ENCODE measurements at regions of chr11 and their contacts with region 1.

Region 1: DNA sequence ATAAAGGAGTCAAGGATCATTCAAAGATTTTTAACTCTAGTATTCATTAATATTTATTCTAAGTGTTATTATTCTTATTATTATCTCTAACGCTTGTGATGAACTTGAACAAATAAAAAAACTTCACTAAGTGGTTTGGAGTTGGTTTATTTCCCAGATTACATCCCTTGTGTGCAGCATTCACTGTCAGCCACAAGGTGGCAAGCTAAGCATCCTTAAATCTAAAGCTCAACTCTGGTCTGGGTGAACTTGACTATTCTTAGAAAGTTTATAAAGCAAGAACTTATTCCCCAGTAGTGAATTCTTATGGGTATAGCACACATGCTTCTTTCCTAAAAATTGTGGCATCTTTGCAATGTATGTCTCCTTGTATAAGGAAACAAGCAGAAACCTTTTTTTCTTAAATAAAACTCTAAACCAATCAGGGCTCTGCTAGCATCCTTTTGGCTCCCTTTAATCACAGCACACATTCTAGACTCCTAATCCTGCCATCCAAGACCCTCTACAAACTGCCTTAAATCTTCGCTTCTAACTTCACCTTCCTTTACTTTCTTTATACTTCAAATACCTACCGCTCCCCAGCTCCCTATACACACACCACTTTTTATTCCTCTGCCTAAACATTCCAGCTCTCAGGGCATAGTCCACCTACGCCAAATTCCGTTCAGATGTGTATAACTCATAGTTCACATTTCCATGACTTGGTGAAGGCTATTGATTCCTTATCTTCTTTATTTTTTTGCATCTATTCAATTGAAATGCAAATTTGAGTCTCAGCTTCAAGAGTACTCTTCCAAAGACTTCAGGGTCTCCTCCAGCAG is 1068.8 kb downstream of the DLG2 start:
- DNase-seq: peak; percentile 57
- H3K4me3 Mint-ChIP-seq: no peak overlapping the region
- H3K27ac Mint-ChIP-seq: no peak overlapping the region
- H3K4me1 Mint-ChIP-seq: no peaks in the 10 kb centered on the region
- H3K27me3 Mint-ChIP-seq: peaks cover 52% of the 10 kb centered on the region
- CTCF ChIP-seq: peak; percentile 80

Region 2: DNA sequence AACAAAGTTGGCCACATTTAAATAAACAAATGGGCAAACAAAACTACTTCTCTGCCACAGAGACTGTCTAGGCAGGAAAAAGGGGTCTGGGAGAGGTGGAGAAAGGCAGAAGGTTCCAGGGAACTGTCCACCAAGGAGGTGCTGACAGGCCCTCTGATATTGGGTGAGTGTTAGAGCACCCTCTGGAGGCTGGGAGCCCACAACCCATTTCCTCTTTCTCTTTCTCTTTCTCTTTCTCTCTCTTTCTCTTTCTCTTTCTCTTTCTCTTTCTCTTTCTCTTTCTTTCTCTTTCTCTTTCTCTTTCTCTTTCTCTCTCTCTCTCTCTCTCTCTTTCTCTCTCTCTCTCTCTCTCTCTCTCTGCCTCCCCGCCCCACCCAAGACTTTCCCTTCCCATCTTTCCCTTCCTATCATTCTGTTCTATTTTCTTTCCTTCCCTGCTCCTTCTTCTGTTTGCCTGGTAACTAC is 156.1 kb after region 1 on chr11:
- CTCF ChIA-PET with region 1: no interaction called
- POLR2A ChIA-PET with region 1: no interaction called
- intact Hi-C with region 1: loop called (anchors 2 kb)
- DNase-seq: peak; percentile 76
- H3K4me3 Mint-ChIP-seq: no peak overlapping the region
- H3K27ac Mint-ChIP-seq: no peak overlapping the region
- H3K4me1 Mint-ChIP-seq: no peaks in the 10 kb centered on the region
- H3K27me3 Mint-ChIP-seq: peaks cover 9% of the 10 kb centered on the region
- CTCF ChIP-seq: peak; percentile 39

Measured in MCF 10A (cell line).